Mammary epithelial cell (primary cell): ENCODE measurements at regions of chr3 and their contacts with region 1.

Region 1: GRCh38 chr3:29186982-29187725 is 93.7 kb upstream of the RBMS3 start:
- DNase-seq: peak; percentile 94
- H3K4me3 ChIP-seq: no peak overlapping the region
- H3K27ac ChIP-seq: peak overlapping the region; percentile 87
- H3K4me1 ChIP-seq: peaks cover 27% of the 10 kb centered on the region
- H3K27me3 ChIP-seq: no peaks in the 10 kb centered on the region
- CTCF ChIP-seq: no peak

Region 2: DNA sequence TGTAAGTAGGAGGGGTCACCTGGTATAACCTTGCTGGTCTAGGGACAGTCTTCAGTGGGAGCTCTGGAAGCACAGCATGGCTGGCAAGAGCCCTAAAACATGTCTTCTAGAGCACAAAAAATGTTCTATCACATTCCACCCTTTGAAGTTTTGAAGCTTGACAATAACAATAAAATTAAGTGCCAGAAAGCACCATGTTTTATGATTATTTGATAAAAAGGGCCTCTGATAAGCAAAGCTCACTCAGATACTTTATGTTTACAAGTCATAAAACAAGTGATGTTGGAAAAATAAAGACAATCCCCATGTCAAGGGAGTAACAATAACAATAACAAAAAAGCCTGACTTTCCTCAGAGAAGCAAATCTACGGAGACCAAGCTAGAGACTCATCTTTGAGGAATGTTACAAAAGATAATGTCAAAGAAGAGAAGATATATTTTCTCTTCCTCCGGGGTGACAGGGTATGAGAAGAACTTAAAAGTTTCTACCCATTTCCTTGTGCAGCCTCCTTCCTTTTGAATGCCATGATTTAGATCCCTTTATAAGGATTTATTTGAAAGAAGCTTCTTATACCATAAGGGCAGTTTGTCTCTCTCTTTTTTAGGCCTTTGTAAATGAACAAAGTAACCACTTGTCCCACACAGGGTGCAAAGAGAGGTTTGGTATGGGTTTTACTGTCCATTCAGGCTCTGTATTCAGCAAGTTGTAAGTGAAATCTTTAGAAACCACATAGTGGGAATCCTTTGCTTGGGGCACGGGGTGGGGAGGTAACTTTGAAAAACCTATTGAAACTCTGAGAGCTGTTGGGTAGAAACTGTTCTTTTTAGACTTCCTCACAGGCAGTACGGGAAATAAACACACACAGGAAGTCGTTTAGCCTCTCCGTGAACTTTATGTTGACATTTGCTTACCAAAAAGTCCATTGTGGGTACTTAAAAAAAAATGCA is 15.8 kb before region 1 on chr3:
- CTCF ChIA-PET with region 1: interaction called, 14 read pairs
- dilution Hi-C with region 1: no loop called
- in situ Hi-C with region 1: no loop called
- intact Hi-C with region 1: no loop called
- DNase-seq: no peak
- H3K4me3 ChIP-seq: no peak overlapping the region
- H3K27ac ChIP-seq: no peak overlapping the region
- H3K4me1 ChIP-seq: no peaks in the 10 kb centered on the region
- H3K27me3 ChIP-seq: no peaks in the 10 kb centered on the region
- CTCF ChIP-seq: no peak

Region 3: DNA sequence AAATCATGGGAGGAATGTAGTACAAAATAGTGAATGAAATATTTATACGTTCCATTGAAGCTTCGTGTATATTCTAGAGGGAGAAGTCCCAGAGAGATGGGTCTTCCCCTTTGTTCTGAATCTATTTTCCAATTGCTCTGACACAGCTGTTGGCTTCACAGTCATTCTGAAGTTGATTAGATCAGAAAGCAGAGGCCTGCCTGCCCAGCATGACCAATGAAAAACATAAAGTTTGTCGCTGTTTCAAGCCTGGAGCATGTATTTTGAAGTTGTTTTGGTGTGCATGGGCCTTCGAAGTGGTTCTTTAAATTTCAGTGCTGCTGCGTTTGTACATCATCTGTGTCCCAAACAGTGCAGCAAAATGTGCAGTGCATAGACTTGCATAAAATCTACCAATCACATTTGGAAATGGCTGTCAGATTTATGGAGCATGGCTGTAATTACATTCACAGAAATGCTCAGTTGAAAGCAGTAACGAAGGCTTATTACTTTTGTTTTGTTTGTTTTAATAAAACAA is 62.7 kb after region 1 on chr3:
- CTCF ChIA-PET with region 1: no interaction called
- dilution Hi-C with region 1: no loop called
- in situ Hi-C with region 1: no loop called
- intact Hi-C with region 1: loop called (anchors 5 kb)
- DNase-seq: no peak
- H3K4me3 ChIP-seq: no peak overlapping the region
- H3K27ac ChIP-seq: no peak overlapping the region
- H3K4me1 ChIP-seq: peaks cover 23% of the 10 kb centered on the region
- H3K27me3 ChIP-seq: no peaks in the 10 kb centered on the region
- CTCF ChIP-seq: no peak